ENCODE measurements at regions of chr6 and their contacts with region 1.

Region 1: DNA sequence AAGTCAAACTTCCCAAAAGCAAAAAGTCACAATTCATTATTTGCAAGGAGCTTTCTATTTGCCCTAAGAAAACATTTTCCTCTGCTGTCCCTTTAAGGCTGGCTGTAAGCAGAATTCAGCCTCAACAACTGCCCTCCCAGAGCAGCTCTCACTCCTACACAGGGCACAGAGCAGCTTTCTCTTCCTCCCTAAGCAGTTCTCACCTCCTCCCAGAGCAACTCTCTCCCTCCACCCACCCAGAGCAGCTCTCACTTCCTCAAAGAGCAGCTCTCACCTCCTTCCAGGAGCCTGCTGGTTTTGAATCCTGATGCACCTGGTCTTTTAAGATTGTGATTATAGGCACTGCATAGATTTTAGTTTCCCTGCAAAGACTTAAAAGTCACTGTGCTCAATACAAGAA is 120.6 kb upstream of the TMEM181 start:
- DNase-seq: no peak
- H3K4me3 ChIP-seq: no peak overlapping the region
- CTCF ChIP-seq: no peak

Region 2: DNA sequence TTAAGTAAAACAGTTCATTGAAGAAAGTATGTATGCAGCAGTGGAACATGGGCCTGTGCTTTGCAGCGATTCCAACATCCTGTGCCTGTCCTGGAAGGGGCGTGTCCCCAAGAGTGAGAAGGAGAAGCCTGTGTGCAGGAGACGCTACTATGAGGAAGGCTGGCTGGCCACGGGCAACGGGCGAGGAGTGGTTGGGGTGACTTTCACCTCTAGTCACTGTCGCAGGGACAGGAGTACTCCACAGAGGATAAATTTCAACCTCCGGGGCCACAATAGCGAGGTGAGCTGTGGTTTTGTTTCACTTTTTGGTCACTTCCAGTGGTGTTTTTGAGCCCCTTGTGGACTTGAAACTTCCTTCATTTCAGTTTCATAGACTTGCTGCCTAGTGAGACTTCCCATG is 125.3 kb before region 1 on chr6:
- in situ Hi-C with region 1: loop called (anchors 10 kb)
- DNase-seq: no peak
- H3K4me3 ChIP-seq: no peak overlapping the region
- CTCF ChIP-seq: no peak